Dorsolateral prefrontal cortex (tissue), 120 donors: ENCODE measurements at regions of chr15 and their contacts with region 1.

Region 1: DNA sequence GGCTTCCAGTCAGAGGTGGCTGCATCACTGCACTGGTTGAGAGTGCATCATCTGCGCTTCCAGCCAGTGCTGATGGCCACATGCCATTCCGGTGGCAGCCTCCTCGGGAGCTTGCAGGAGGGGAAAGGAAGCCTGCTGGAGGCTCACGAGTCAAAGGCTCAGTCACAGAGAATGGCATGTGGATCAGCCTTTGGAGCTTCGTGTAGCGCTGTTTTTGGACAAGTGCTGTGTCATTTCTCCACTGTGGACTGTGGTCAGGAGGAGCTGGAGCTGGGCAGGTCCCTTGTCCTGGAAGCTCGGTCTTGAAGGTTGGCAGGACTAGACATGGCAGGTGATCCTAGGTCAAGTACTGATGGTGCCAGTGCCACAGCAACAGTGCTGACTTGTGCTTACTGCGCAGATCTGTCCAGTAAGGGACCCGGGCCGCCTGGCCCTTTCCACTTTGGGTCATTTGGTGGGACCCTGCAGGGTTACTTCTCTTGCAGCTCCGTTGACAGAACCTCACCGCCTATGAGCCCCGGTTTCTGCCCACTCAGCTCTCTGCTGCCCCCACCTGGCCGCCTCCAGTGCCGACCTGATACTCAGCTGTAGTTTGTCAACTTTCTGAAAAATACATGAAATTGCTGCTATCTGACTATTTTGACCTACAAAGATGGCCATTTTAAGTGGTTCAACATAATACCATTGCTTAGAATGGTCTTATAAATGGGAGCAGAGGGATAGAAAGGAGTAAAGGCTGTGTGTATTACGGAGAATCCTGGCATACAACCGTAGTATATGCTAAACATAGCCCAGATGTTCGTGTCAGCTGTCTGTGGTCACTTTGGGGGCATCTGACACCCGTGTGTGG is 27.6 kb upstream of the TRPM1 start:
- DNase-seq: peak; percentile 60 to 87 (median 74)
- H3K4me3 ChIP-seq: peak overlapping the region in 16 of 59 donors; percentile 3 to 47 (median 23)
- H3K27ac ChIP-seq: peak overlapping the region in 1 of 59 donors; percentile 26
- H3K27me3 ChIP-seq: no peaks in the 10 kb centered on the region
- CTCF ChIP-seq: peak; percentile 75 to 98 (median 93)

Region 2: DNA sequence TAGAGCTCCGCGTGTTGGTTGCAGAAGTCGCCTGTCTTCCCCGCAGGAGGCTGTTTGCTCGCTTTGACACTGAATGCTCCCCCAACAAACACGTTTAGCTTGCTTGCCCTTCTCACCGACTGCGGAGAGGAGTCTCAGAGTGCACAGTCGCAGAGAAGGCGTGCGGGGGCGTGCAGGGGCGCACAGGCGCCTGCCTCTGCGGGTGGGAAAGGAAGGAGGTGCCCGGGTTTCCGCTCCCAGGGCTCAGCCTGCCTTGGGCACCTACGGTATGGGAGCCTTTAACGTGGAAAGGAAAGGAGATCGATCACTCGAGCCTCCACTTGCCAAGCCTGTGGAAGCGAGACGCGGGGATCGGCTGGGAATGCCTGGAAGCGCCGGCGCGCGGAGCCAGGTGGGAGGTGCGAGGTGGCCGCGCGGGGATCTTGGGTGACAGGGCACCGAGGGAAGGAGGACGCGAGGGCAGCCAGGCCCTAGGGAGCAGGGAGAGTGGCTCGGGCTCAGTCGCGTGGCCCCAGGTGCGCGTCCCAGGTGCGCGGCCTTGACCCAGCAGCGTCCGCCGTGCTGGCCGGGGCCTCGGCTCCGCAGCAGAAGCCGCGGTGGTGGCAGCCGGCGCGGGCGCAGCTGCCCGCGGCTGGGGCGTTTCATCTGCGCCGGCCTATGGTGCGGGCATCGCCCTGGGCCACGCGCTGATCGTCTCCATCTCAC is 225.5 kb before region 1 on chr15 and contains the start of gene FAN1:
- intact Hi-C with region 1: loop called in 1 of 2 experiments (anchors 5 kb)
- DNase-seq: peak; percentile 75 to 96 (median 90)
- H3K4me3 ChIP-seq: peak within 1 kb of the TSS; percentile 51 to 98 (median 85)
- H3K27ac ChIP-seq: peak within 1 kb of the TSS; percentile 20 to 96 (median 87)
- H3K27me3 ChIP-seq: no peaks in the 10 kb centered on the region
- CTCF ChIP-seq: peak in 27 of 56 donors; percentile 13 to 53 (median 30)
- total RNA-seq, gene FAN1: 30.1 to 55.7 (median 39.8) TPM

Region 3: GRCh38 chr15:30991255-30992072 is 137.7 kb before region 1 on chr15 and contains the start of gene MTMR10:
- intact Hi-C with region 1: loop called (anchors 5 kb)
- DNase-seq: peak; percentile 42 to 85 (median 57)
- H3K4me3 ChIP-seq: peak within 1 kb of the TSS; percentile 67 to 100 (median 94)
- H3K27ac ChIP-seq: peak within 1 kb of the TSS; percentile 77 to 99 (median 95)
- H3K27me3 ChIP-seq: no peaks in the 10 kb centered on the region
- CTCF ChIP-seq: peak in 22 of 56 donors; percentile 7 to 40 (median 18)
- total RNA-seq, gene MTMR10: 33.2 to 154 (median 67.8) TPM

Region 4: GRCh38 chr15:31080591-31081014 is 48.5 kb before region 1 on chr15:
- intact Hi-C with region 1: loop called in 1 of 2 experiments (anchors 10 kb)
- DNase-seq: peak in 1 of 10 donors; percentile 12
- H3K4me3 ChIP-seq: peak overlapping the region in 47 of 59 donors; percentile 9 to 61 (median 40)
- H3K27ac ChIP-seq: peak overlapping the region in 3 of 59 donors; percentile 28 to 42 (median 31)
- H3K27me3 ChIP-seq: peaks cover 0 to 6% (median 0%) of the 10 kb centered on the region in 45 donors
- CTCF ChIP-seq: no peak